Mammary epithelial cell (primary cell): ENCODE measurements at regions of chr22 and their contacts with region 1.

Region 1: DNA sequence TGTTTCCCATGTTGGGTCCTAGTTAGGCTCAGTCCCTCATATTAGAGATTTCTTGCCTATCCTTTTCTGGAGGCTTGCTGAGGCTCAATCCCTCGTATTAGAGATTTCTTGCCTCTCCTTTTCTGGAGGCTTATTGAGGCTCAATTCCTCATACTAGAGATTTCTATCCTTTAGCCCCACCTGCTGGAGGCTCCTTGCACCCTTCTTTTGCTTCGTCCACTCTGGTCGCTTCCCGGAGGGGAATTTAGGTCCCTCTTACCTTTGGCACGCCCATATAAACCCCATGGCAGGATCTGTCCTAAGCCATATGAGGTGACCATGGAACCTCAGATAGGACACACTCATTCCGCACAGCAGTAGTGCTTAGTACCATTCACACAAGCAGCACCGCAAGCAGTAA is 15.9 kb downstream of the CYP2D6 start:
- DNase-seq: no peak
- H3K4me3 ChIP-seq: no peak overlapping the region
- H3K27ac ChIP-seq: no peak overlapping the region
- H3K4me1 ChIP-seq: no peaks in the 10 kb centered on the region
- H3K27me3 ChIP-seq: no peaks in the 10 kb centered on the region
- CTCF ChIP-seq: no peak

Region 2: DNA sequence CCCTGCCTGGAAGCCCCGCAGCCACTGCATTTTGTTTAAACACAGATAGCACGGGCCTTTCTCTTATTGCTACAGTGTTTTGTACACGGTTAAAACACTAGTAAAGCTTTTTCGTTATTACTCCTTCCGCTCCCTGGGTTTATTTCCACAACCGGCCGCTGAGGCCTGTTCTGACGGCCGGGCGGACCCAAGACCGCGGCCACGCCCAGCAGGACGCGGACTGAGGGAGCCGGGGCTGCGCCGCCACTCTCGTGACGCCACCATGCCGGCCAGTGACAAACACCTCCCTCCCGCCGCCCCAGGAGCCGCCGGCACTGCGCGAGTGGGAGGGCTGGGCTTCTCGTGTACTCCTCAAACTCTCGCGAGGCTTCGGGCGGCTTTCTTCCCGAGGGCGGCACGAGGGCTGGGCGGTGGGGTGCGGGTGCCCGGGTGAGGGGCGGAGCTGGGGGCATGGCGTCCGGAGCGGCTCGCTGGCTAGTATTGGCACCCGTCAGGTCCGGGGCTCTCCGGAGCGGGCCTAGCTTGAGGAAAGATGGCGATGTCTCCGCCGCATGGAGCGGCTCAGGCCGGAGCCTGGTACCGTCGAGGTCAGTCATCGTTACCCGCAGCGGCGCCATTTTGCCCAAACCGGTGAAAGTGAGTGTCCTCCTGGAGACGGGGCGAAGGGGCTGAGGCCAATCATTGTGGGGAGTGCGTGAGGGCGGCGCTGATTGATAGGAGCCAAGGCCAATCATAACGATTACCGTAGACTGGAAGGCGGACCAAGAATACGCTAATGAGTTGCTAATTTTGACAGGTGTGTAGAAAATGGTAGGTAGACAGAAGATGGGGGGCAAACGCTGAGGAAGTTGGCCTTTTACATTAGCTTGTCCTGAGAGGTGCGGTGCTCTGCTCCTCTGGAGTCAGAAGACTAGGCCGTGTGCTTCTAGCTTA is 35.1 kb before region 1 on chr22 and contains the start of gene SMDT1:
- CTCF ChIA-PET with region 1: no interaction called
- dilution Hi-C with region 1: no loop called
- in situ Hi-C with region 1: no loop called
- intact Hi-C with region 1: no loop called
- DNase-seq: peak; percentile 97
- H3K4me3 ChIP-seq: peak within 1 kb of the TSS; percentile 68 to 92 (median 76)
- H3K27ac ChIP-seq: peak within 1 kb of the TSS; percentile 85
- H3K4me1 ChIP-seq: peaks cover 16% of the 10 kb centered on the region
- H3K27me3 ChIP-seq: no peaks in the 10 kb centered on the region
- CTCF ChIP-seq: no peak
- total RNA-seq, gene SMDT1: 2.7 to 47.1 TPM

Region 3: GRCh38 chr22:42142771-42143461 is 28.2 kb after region 1 on chr22:
- CTCF ChIA-PET with region 1: no interaction called
- dilution Hi-C with region 1: no loop called
- in situ Hi-C with region 1: no loop called
- intact Hi-C with region 1: no loop called
- DNase-seq: no peak
- H3K4me3 ChIP-seq: no peak overlapping the region
- H3K27ac ChIP-seq: no peak overlapping the region
- H3K4me1 ChIP-seq: no peaks in the 10 kb centered on the region
- H3K27me3 ChIP-seq: no peaks in the 10 kb centered on the region
- CTCF ChIP-seq: no peak

Region 4: DNA sequence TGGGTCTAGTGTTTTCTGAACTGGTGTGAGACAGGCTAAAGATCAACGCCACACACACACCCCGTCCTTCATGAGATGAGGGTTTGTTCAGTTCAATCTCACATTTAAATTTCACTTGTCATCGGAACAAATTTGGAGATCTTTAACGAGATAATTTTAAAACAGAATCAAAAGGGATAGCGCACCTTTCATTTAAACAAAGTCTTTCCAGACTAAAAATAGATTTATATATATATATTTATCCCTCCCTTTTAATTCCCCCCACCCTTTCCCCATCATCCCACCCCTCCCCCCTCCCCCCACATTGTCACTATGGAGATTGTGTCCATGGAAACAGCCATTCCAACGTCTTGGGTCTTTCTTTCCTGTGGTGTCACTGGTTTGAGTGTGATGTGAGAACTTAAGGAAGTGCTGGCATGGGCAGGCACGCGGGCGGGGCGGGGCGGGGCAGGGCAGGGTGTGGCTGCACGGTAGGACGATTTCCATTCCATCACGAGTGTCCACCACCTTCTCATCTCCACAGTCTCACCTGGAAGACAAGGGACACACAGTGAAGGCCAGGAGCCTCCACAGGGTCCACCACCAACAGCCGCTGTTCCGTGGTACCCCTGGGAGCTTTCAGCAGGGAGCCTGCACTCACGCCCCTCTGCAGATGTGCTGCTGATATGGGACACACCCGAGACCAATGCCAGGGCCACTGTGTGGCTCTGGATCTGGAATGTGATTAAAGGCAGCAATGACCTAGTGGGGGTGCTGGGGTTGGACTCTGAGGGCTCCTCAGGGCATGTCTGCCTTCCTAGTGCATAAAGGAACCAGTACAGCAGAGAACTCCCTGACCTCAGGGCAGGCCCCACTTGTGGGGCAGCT is 46.3 kb after region 1 on chr22:
- CTCF ChIA-PET with region 1: no interaction called
- dilution Hi-C with region 1: loop called (anchors 5 kb)
- in situ Hi-C with region 1: no loop called
- intact Hi-C with region 1: no loop called
- DNase-seq: no peak
- H3K4me3 ChIP-seq: no peak overlapping the region
- H3K27ac ChIP-seq: no peak overlapping the region
- H3K4me1 ChIP-seq: peaks cover 36% of the 10 kb centered on the region
- H3K27me3 ChIP-seq: no peaks in the 10 kb centered on the region
- CTCF ChIP-seq: no peak

Region 5: GRCh38 chr22:42180349-42180842 is 65.7 kb after region 1 on chr22:
- CTCF ChIA-PET with region 1: no interaction called
- dilution Hi-C with region 1: loop called (anchors 10 kb)
- in situ Hi-C with region 1: no loop called
- intact Hi-C with region 1: no loop called
- DNase-seq: no peak
- H3K4me3 ChIP-seq: no peak overlapping the region
- H3K27ac ChIP-seq: no peak overlapping the region
- H3K4me1 ChIP-seq: peaks cover 8% of the 10 kb centered on the region
- H3K27me3 ChIP-seq: no peaks in the 10 kb centered on the region
- CTCF ChIP-seq: no peak

Region 6: GRCh38 chr22:42270512-42271417 is 156.0 kb after region 1 on chr22 and contains the start of gene TCF20:
- CTCF ChIA-PET with region 1: no interaction called
- dilution Hi-C with region 1: no loop called
- in situ Hi-C with region 1: no loop called
- intact Hi-C with region 1: no loop called
- DNase-seq: peak; percentile 70
- H3K4me3 ChIP-seq: peak within 1 kb of the TSS; percentile 82 to 97 (median 89)
- H3K27ac ChIP-seq: peak within 1 kb of the TSS; percentile 78
- H3K4me1 ChIP-seq: peaks cover 16% of the 10 kb centered on the region
- H3K27me3 ChIP-seq: no peaks in the 10 kb centered on the region
- CTCF ChIP-seq: peak in 1 of 2 donors; percentile 6
- total RNA-seq, gene TCF20: 49.2 to 62.5 TPM

Region 7: GRCh38 chr22:42444077-42444904 is 329.6 kb after region 1 on chr22:
- CTCF ChIA-PET with region 1: no interaction called
- dilution Hi-C with region 1: loop called (anchors 5 kb)
- in situ Hi-C with region 1: no loop called
- intact Hi-C with region 1: no loop called
- DNase-seq: peak; percentile 84
- H3K4me3 ChIP-seq: peak overlapping the region in 2 of 3 experiments; percentile 10 to 30
- H3K27ac ChIP-seq: no peak overlapping the region
- H3K4me1 ChIP-seq: peaks cover 22% of the 10 kb centered on the region
- H3K27me3 ChIP-seq: no peaks in the 10 kb centered on the region
- CTCF ChIP-seq: peak; percentile 52 to 70